HepG2 (cell line): ENCODE measurements at regions of chr6 and their contacts with region 1.

Region 1: DNA sequence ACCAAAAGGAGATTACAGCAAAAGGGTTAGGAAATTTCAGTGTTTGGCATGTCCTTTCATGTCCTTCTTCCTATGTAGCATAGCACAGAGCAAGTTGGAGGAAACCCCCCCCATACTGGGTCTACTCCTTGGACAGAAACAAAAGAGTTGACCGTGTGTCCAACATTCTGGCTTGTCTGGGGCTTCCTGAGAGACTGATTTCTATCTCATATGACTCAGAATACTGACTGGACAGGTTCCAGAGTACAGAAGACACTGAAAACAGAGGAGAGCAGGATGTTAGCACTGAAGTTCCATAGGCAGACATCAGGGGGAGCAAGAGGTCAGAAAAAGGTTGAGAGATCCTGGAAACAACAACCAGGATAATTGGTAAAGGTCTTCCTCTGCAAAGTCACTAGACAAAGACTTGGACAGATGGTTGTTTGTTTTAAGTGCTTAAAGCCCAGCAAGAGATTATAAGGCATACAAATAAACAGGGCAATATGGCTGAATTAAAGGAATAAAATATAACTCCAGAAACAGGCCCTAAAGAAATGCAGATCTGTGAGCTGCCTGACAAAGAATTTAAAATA is 48.4 kb downstream of the USP49 start:
- DNase-seq: peak; percentile 93
- ATAC-seq: peak; percentile 100
- H3K4me3 ChIP-seq: peak overlapping the region in 1 of 3 experiments; percentile 24; a peak in 1 of 6 replicates
- H3K27ac ChIP-seq: peak overlapping the region; percentile 68
- H3K4me1 ChIP-seq: peaks cover 16% of the 10 kb centered on the region
- H3K27me3 ChIP-seq: no peaks in the 10 kb centered on the region
- CTCF ChIP-seq: peak; percentile 93
- EP300 ChIP-seq: no peak
- POLR2A ChIP-seq: peak in 1 of 2 experiments; percentile 34; a peak in 1 of 4 replicates
- RAD21 ChIP-seq: peak; percentile 85

Region 2: GRCh38 chr6:41936073-41936837 is 89.5 kb after region 1 on chr6:
- CTCF ChIA-PET with region 1: interaction called, 13 read pairs
- POLR2A ChIA-PET with region 1: no interaction called
- in situ Hi-C with region 1: no loop called
- intact Hi-C with region 1: loop called (anchors 1 kb)
- DNase-seq: peak; percentile 87
- ATAC-seq: peak; percentile 80
- H3K4me3 ChIP-seq: no peak overlapping the region
- H3K27ac ChIP-seq: peak overlapping the region; percentile 3
- H3K4me1 ChIP-seq: peaks cover 30% of the 10 kb centered on the region
- H3K27me3 ChIP-seq: no peaks in the 10 kb centered on the region
- CTCF ChIP-seq: peak; percentile 92
- EP300 ChIP-seq: peak in 1 of 2 experiments; percentile 13; a peak in 1 of 4 replicates
- POLR2A ChIP-seq: peak in 1 of 2 experiments; percentile 9; a peak in 1 of 4 replicates
- RAD21 ChIP-seq: peak; percentile 72